Activated CD8-positive, alpha-beta T cell treated with anti-CD3 and anti-CD28 coated beads for 36 hours (primary cell): ENCODE measurements at regions of chr18 and their contacts with region 1.

Region 1: GRCh38 chr18:31954349-31954748 is 11.4 kb upstream of the TRAPPC8 start:
- DNase-seq: no peak
- ATAC-seq: no peak
- H3K4me3 Mint-ChIP-seq: no peak overlapping the region
- H3K27ac Mint-ChIP-seq: no peak overlapping the region
- H3K4me1 Mint-ChIP-seq: peaks cover 1% of the 10 kb centered on the region
- H3K27me3 Mint-ChIP-seq: no peaks in the 10 kb centered on the region
- CTCF ChIP-seq: no peak

Region 2: DNA sequence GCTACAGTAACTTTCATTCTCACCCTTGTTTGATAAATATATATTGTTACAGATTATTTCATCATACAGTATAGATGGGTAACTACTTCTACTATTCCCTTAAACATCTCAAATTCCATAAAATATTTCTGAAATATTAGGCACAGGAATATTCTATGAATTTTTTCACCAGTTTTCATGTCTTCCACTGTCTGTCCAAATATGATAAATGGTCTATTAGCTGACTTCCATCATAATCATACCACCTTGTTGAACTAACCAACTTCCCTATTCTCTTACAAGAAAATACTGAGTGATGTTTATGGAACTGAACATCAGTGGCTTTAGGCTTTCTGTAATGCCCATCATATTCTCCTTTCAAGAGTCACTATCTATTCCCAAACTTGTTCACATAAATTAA is 93.9 kb before region 1 on chr18:
- CTCF ChIA-PET with region 1: no interaction called
- POLR2A ChIA-PET with region 1: no interaction called
- intact Hi-C with region 1: loop called (anchors 10 kb)
- DNase-seq: no peak
- ATAC-seq: no peak
- H3K4me3 Mint-ChIP-seq: no peak overlapping the region
- H3K27ac Mint-ChIP-seq: no peak overlapping the region
- H3K4me1 Mint-ChIP-seq: peaks cover 4% of the 10 kb centered on the region
- H3K27me3 Mint-ChIP-seq: no peaks in the 10 kb centered on the region
- CTCF ChIP-seq: no peak